ENCODE measurements at regions of chr14 and their contacts with region 1.

Region 1: DNA sequence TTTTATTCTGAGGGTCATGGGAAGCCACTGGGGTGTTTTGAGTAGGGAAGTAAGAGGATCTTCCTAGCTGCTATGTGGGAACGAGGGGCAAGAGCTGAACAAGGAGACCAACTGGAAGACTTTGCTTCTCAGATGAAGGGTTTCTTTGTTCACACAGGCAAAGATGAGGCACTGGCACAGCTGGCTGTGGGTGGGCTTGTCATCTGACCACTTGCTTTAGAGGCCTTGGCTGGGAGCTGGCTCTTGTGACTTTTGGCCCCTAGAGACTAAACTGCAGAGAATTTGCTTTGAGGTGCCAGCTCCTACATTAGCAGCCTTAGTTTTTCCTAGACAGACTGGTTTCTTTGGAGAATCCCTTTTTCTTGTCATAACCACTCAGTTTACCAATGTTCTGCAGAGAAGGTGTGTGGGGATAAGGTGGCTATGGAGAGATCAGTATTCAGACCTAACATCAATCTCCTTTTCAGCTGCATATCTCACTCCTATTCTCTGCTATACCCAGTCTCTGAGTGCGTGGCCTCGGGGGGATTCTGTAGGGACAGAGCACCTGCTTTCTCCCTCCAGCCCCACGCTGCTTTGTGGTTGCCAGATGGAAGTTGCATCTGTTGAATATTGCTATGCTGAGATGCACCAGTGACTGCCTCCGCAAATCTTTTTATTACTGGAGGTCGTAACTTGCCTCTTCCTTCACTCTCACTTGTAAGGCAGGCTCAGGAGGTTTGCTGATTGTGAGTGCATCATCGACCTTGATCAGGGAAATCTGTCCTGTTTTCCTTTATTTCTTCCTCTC is 12.7 kb downstream of the PPP2R5C start:
- DNase-seq: no peak
- ATAC-seq: no peak
- H3K4me3 ChIP-seq: no peak overlapping the region
- H3K27ac ChIP-seq: peak overlapping the region in 1 of 10 donors; percentile 26
- H3K4me1 ChIP-seq: peaks cover 2 to 38% (median 20%) of the 10 kb centered on the region in 9 donors
- H3K27me3 ChIP-seq: peaks cover 0 to 2% (median 0%) of the 10 kb centered on the region in 7 donors
- CTCF ChIP-seq: no peak

Region 2: GRCh38 chr14:101669629-101670028 is 104.6 kb before region 1 on chr14:
- intact Hi-C with region 1: no loop called
- DNase-seq: no peak
- ATAC-seq: no peak
- H3K4me3 ChIP-seq: no peak overlapping the region
- H3K27ac ChIP-seq: no peak overlapping the region
- H3K4me1 ChIP-seq: no peaks in the 10 kb centered on the region
- H3K27me3 ChIP-seq: peaks cover 0 to 38% (median 33%) of the 10 kb centered on the region in 7 donors
- CTCF ChIP-seq: no peak

Region 3: DNA sequence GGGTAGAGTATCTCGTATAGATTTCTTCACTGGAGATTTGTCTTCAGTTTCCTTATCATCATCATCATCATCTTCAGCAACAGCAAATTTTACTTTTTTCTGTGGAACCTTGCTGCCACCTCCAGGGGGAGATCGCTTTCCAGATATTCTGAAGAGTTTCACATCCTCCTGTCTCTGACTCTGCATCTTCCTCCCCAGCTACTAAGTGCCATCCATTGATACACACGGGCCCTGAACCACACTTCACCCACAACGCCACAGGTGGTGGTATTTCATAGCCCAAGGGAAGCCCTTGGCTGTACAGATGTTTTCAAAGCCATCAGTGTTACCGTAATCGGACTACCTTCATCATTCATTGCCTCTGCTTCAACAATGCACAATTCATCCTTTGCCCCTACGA is 69.5 kb after region 1 on chr14:
- intact Hi-C with region 1: loop called in 2 of 10 experiments (anchors 5 kb)
- DNase-seq: no peak
- ATAC-seq: peak in 4 of 8 donors; percentile 21 to 40 (median 27)
- H3K4me3 ChIP-seq: no peak overlapping the region
- H3K27ac ChIP-seq: peak overlapping the region in 7 of 10 donors; percentile 26 to 68 (median 45)
- H3K4me1 ChIP-seq: peaks cover 4 to 71% (median 43%) of the 10 kb centered on the region in 9 donors
- H3K27me3 ChIP-seq: no peaks in the 10 kb centered on the region
- CTCF ChIP-seq: peak in 6 of 9 donors; percentile 21 to 52 (median 40)

Region 4: GRCh38 chr14:101889898-101890297 is 115.7 kb after region 1 on chr14:
- intact Hi-C with region 1: loop called in 6 of 10 experiments (anchors 5 to 10 kb)
- DNase-seq: no peak
- ATAC-seq: no peak
- H3K4me3 ChIP-seq: no peak overlapping the region
- H3K27ac ChIP-seq: no peak overlapping the region
- H3K4me1 ChIP-seq: no peaks in the 10 kb centered on the region
- H3K27me3 ChIP-seq: no peaks in the 10 kb centered on the region
- CTCF ChIP-seq: peak in 3 of 9 donors; percentile 21 to 39 (median 36)

Region 5: DNA sequence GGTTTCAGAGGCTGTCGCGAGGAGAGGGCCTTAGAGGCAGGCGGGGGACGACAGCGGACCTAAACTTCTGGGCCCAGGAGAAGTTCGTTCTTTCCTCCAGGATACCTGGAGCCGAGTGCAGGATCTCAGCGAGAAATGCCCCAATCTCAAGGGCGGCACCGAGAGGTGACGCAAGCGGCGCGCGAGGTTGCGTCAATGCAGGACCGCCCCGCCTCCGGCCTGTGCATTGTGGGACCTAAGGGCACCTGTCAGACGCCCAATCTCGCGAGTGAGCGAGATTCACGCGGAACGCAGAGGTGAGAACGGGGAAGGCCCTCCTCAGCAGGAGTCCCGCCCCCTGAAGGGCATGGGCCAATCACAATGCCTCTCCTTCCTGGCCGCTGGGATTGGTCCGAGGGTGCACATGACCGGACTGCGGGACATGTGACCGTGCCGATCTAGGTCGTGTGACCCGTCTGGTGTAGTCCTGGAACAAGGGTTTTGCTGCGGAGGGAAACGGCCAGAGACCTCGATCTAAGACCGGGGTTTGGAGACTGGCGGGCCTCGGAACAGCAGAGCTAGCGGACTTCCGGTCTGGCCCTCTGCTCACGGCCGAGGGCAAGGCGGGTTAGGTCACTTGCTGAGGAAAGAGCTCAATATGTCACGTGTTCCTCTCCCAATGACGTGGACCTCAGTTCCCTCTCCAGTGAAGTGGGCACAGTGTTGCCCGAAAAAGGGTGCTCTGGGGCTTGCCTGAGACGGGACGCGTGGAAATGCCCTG is 173.9 kb after region 1 on chr14:
- intact Hi-C with region 1: loop called in 5 of 10 experiments (anchors 5 to 10 kb)
- DNase-seq: peak; percentile 100
- ATAC-seq: peak; percentile 98 to 99 (median 99)
- H3K4me3 ChIP-seq: peak overlapping the region; percentile 57 to 98 (median 78)
- H3K27ac ChIP-seq: peak overlapping the region; percentile 84 to 100 (median 96)
- H3K4me1 ChIP-seq: peaks cover 3 to 29% (median 20%) of the 10 kb centered on the region in 9 donors
- H3K27me3 ChIP-seq: peaks cover 0 to 25% (median 0%) of the 10 kb centered on the region in 7 donors
- CTCF ChIP-seq: no peak